ENCODE measurements at regions of chr4 and their contacts with region 1.

Region 1: GRCh38 chr4:119041951-119042560 is 93.6 kb upstream of the MYOZ2 start:
- DNase-seq: peak; percentile 71
- ATAC-seq: peak; percentile 85
- H3K4me3 Mint-ChIP-seq: no peak overlapping the region
- H3K27ac Mint-ChIP-seq: no peak overlapping the region
- H3K4me1 Mint-ChIP-seq: peaks cover 16% of the 10 kb centered on the region
- H3K27me3 Mint-ChIP-seq: no peaks in the 10 kb centered on the region

Region 2: DNA sequence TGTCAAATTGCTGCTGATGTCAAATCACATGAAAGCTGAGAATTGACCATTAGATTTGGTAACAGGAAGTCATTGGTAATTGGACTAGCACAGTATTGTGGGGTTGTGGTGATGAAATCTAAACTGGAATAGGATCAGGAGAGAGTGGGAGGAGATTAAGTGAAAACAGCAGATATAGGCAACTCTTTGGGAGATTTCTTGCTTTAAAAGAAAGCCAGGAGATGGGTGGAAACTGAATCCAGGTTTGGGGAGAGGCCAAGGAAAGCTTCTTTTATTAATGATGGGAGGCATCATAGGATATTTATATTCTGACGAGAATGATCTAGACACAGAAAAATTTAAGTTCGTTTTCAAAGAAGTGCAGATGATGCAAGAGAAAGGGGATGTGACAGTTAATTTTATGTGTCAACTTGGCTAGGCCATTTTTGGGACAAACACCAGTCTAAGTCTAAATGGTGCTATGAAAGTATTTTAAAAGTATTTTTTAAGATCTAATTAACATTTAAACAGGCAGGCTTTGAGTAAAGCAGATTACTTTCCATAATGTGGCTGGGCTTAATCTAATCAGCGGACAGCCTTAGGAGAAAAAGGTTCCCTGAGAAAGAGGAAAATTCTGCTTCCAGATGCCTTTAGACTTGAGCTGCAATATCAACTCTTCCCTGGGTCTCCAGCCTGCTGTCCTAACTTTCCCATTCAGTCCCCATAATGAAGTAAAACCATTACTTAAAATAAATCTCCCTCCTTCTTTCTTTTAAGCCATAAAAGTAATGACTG is 230.9 kb before region 1 on chr4:
- CTCF ChIA-PET with region 1: no interaction called
- POLR2A ChIA-PET with region 1: no interaction called
- intact Hi-C with region 1: no loop called
- DNase-seq: no peak
- ATAC-seq: no peak
- H3K4me3 Mint-ChIP-seq: no peak overlapping the region
- H3K27ac Mint-ChIP-seq: peak overlapping the region; percentile 7
- H3K4me1 Mint-ChIP-seq: no peaks in the 10 kb centered on the region
- H3K27me3 Mint-ChIP-seq: no peaks in the 10 kb centered on the region

Region 3: GRCh38 chr4:118981839-118982381 is 60.1 kb before region 1 on chr4:
- CTCF ChIA-PET with region 1: interaction called, 11 read pairs
- POLR2A ChIA-PET with region 1: no interaction called
- intact Hi-C with region 1: loop called (anchors 2 to 5 kb)
- DNase-seq: peak; percentile 73
- ATAC-seq: peak; percentile 60
- H3K4me3 Mint-ChIP-seq: no peak overlapping the region
- H3K27ac Mint-ChIP-seq: no peak overlapping the region
- H3K4me1 Mint-ChIP-seq: no peaks in the 10 kb centered on the region
- H3K27me3 Mint-ChIP-seq: peaks cover 7% of the 10 kb centered on the region

Region 4: GRCh38 chr4:119238068-119238722 is 196.1 kb after region 1 on chr4:
- CTCF ChIA-PET with region 1: interaction called, 9 read pairs
- POLR2A ChIA-PET with region 1: no interaction called
- intact Hi-C with region 1: loop called in 1 of 2 experiments (anchors 1 kb)
- DNase-seq: peak; percentile 46
- ATAC-seq: peak; percentile 98
- H3K4me3 Mint-ChIP-seq: peak overlapping the region; percentile 24
- H3K27ac Mint-ChIP-seq: peak overlapping the region; percentile 75
- H3K4me1 Mint-ChIP-seq: peaks cover 44% of the 10 kb centered on the region
- H3K27me3 Mint-ChIP-seq: no peaks in the 10 kb centered on the region

Region 5: GRCh38 chr4:119300101-119300978 is 258.3 kb after region 1 on chr4:
- CTCF ChIA-PET with region 1: interaction called, 36 read pairs
- POLR2A ChIA-PET with region 1: no interaction called
- intact Hi-C with region 1: loop called in 1 of 2 experiments (anchors 1 kb)
- DNase-seq: peak; percentile 97
- ATAC-seq: peak; percentile 98
- H3K4me3 Mint-ChIP-seq: peak overlapping the region; percentile 100
- H3K27ac Mint-ChIP-seq: peak overlapping the region; percentile 96
- H3K4me1 Mint-ChIP-seq: peaks cover 25% of the 10 kb centered on the region
- H3K27me3 Mint-ChIP-seq: no peaks in the 10 kb centered on the region